K562 (cell line): ENCODE measurements at regions of chr18 and their contacts with region 1.

Region 1: GRCh38 chr18:35143622-35144596 is 96.9 kb upstream of the ZNF397 start:
- DNase-seq: peak; percentile 28 to 76 (median 50)
- ATAC-seq: peak; percentile 99
- H3K4me3 ChIP-seq: no peak overlapping the region
- H3K27ac ChIP-seq: no peak overlapping the region
- H3K4me1 ChIP-seq: no peaks in the 10 kb centered on the region; a peak in 2 of 5 replicates
- H3K27me3 ChIP-seq: no peaks in the 10 kb centered on the region
- CTCF ChIP-seq: peak; percentile 87 to 94 (median 89)
- EP300 ChIP-seq: no peak
- POLR2A ChIP-seq: no peak
- RAD21 ChIP-seq: peak; percentile 91 to 96

Region 2: GRCh38 chr18:35005963-35006577 is 137.8 kb before region 1 on chr18:
- CTCF ChIA-PET with region 1: interaction called, 32 read pairs
- POLR2A ChIA-PET with region 1: no interaction called
- in situ Hi-C with region 1: loop called (anchors 10 kb)
- intact Hi-C with region 1: loop called (anchors 1 kb)
- DNase-seq: peak; percentile 20 to 80 (median 46)
- ATAC-seq: peak; percentile 98
- H3K4me3 ChIP-seq: no peak overlapping the region
- H3K27ac ChIP-seq: no peak overlapping the region
- H3K4me1 ChIP-seq: no peaks in the 10 kb centered on the region; a peak in 1 of 5 replicates
- H3K27me3 ChIP-seq: peaks cover 0 to 6% of the 10 kb centered on the region in 2 experiments; a peak in 1 of 5 replicates
- CTCF ChIP-seq: peak; percentile 62 to 85 (median 69); a peak in 5 of 6 replicates
- EP300 ChIP-seq: no peak
- POLR2A ChIP-seq: no peak
- RAD21 ChIP-seq: peak; percentile 94 to 97

Region 3: DNA sequence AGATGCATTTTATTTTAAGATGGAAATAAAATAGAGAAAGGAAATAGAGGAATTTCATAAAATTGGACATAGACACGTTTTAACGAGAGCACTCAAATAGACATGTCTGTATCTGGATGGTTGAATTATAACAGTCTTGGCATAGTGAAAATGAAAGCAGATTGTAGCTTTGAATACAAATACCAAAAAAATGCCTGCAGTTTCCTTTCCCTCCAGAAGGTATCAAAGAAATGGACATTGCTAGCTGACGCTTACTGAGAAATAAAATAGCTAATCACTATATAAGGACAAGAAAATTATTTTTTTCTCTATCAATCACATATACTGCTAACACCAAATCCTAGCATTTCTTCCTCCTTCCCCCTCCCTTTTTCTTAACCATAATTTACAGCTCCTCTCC is 114.1 kb before region 1 on chr18:
- CTCF ChIA-PET with region 1: interaction called, 12 read pairs
- POLR2A ChIA-PET with region 1: interaction called, 4 read pairs
- in situ Hi-C with region 1: no loop called
- intact Hi-C with region 1: loop called (anchors 1 kb)
- DNase-seq: no peak
- ATAC-seq: no peak; the same call in 2 of the 3 replicates
- H3K4me3 ChIP-seq: no peak overlapping the region
- H3K27ac ChIP-seq: no peak overlapping the region
- H3K4me1 ChIP-seq: peaks cover 0 to 11% of the 10 kb centered on the region in 2 experiments; a peak in 2 of 5 replicates
- H3K27me3 ChIP-seq: no peaks in the 10 kb centered on the region
- CTCF ChIP-seq: no peak
- EP300 ChIP-seq: no peak
- POLR2A ChIP-seq: no peak
- RAD21 ChIP-seq: no peak

Region 4: DNA sequence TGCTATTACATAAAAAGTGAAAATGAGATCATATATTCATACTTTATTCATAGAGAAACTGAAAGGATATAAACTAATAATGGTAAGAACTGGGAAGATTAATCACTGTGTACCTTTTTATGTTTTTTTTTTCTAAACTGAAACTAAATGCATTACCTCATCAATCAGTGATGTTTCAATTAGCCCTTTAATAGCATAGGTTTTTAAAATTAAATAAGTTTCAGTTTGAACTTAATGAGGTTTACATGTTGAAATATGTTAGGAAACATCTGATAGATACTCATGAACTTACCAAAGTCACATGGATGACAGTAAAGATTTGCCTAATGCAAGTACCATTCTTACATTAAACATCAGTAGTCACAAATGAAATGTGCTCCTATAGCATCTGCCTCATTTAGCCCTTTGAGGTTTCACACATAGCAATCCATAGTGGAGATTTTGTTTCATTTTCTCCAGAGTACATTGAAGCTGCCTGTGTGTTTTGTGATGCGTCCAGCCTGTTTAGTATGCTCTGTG is 93.8 kb before region 1 on chr18:
- CTCF ChIA-PET with region 1: no interaction called
- POLR2A ChIA-PET with region 1: no interaction called
- in situ Hi-C with region 1: no loop called
- intact Hi-C with region 1: no loop called
- DNase-seq: no peak
- ATAC-seq: peak; percentile 17
- H3K4me3 ChIP-seq: no peak overlapping the region
- H3K27ac ChIP-seq: peak overlapping the region; percentile 5; the same call in 1 of the 3 replicates
- H3K4me1 ChIP-seq: peaks cover 15 to 55% of the 10 kb centered on the region in 2 experiments
- H3K27me3 ChIP-seq: no peaks in the 10 kb centered on the region
- CTCF ChIP-seq: no peak
- EP300 ChIP-seq: no peak
- POLR2A ChIP-seq: no peak
- RAD21 ChIP-seq: no peak